Head of caudate nucleus (tissue), 42 donors: ENCODE measurements at regions of chr17 and their contacts with region 1.

Region 1: DNA sequence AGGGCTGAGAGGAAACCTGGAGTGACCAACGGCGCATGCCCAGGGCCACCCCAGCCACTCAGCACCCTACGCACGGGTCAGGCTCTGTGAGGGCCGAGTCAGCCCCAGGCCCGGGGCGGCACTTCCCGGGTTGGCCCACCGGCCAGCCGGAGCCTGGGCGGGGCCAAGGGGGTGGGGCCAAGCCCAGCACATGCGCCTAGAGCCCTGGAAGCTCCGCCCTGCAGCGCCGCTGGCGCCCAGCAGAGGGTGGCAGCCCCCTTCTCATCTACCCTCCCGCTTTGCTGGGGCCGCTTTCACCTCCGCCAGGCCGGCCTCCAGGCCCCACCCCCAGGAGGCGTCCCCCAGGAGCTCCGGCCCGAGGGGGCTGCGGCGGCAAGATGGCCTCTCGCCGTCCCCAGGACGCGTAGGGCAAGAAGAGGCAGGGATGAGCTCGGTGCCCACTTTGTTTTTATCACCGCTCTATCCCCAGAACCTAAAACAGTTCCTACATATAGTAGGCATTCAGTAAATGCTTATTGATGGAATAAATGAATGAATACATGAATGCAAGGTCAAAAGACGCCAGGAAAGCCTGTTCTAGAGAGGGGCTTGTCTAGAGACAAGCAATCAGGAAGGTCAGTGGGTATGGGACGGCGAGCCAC is 31.3 kb downstream of the MYO18A start:
- DNase-seq: peak; percentile 85 to 97 (median 93)

Region 2: GRCh38 chr17:28710861-28711722 is 437.8 kb before region 1 on chr17:
- intact Hi-C with region 1: no loop called
- DNase-seq: peak; percentile 71 to 95 (median 89)

Region 3: DNA sequence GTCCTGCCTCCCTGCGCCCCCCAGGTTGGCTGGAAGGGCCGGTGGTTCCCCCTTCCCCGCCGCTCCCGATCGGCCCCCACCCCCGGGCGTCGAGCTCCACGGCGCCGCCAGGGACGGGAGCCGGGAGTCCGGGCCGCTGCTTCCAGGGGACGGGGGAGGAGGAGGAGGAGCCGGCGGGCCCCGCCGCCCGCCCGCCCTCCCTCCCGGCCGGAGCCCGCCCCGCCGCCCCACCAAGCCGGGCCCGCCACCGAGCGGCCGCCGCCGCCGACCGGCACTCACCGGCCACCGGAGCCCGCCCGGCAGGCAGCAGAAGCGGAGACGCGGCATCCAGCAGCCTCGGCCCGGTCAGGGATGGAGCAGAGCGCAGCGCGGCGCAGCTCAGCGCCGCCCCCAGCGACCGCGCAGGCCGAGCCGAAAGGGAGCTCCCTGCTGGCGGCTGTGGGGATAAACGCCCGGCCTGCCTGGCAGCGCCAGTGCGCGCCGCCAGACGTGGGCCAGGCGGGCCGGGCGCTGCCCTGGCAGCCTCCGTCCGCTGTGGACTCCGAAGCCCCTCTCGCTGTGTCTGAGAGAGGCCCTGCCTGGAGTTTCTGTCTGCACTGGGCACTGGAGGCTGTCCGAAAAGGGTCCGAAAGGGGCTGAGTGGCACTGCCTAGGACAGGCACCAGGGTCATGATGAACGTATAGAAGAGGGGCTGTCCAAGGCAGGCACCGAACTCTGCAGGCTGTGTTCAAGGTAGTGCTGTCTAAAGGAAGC is 31.3 kb after region 1 on chr17 and contains the start of gene MYO18A:
- intact Hi-C with region 1: loop called (anchors 5 kb)
- DNase-seq: peak in 41 of 42 donors; percentile 60 to 93 (median 86)

Region 4: GRCh38 chr17:29219378-29220047 is 70.6 kb after region 1 on chr17:
- intact Hi-C with region 1: loop called (anchors 5 kb)
- DNase-seq: peak; percentile 64 to 98 (median 88)

Region 5: DNA sequence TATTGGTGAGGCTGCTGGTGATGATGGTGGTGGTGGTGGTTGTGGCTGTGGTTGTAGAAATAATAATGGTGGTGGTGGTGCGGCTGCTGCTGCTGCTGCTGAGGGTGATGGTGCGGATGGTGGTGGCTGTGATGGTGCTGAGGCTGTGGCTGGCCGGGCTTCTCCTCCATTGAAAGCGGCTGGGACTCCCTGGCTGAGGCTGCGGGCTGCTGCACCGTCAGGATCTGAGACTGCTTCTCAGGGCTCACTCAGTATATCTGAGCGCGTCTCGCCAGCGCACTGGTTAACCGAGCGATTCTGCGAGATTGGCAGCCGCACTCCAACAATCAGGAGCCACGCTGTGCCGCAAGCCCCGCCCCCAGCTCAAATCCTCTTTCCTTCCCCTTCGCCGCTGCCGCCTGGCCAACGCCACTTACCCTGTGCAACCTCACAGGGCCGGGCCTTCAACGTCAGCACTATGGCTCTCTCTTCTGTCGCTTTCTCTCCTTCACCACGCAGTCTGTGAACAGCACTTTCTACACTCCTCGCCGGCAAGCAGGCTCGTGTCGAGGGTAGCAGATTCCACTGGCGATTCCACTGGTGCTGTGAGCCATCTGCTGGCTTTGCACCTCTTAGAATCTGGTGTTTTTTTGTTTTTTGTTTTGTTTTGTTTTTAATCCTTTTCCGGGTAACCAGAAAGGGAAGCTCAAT is 145.1 kb after region 1 on chr17 and contains the start of gene NUFIP2:
- intact Hi-C with region 1: loop called (anchors 5 kb)
- DNase-seq: peak; percentile 98 to 100 (median 100)